ENCODE measurements at regions of chr22 and their contacts with region 1.

Region 1: GRCh38 chr22:45925811-45926351 is 51.1 kb downstream of the WNT7B start:
- DNase-seq: no peak
- ATAC-seq: peak; percentile 65
- H3K4me3 ChIP-seq: no peak overlapping the region
- H3K27ac ChIP-seq: peak overlapping the region; percentile 77
- H3K4me1 ChIP-seq: peaks cover 25% of the 10 kb centered on the region
- H3K27me3 ChIP-seq: no peaks in the 10 kb centered on the region
- CTCF ChIP-seq: no peak

Region 2: DNA sequence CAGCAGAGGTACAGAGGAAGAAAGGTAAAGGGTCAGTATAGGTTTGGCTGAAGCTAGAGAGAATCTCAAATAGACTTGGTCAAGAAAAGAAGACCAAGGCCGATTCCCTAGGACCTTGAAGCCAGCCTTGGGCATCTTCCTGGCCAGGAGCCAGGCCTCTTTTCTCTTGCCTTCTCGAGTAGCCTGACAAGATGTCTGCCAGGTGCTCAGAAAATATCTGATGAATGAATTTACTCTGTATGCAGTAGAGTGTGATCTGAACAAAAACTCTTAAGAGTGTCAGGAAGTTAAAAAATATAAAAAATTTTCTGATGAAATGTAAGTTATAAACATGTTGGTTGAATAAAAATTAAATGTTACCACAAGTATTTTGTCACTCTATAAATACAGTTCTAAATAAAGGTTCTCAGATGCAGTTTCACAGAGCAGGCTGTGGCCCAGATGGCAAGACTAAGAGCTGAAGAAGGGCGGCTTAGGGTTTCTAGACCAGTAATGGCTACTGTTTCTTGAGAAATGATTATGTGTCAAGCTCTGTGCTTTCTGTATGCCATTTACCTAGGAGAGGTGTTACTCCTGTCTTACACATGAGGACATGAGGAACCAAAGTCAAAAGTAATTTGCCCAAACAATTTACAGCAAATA is 156.2 kb before region 1 on chr22:
- CTCF ChIA-PET with region 1: no interaction called
- POLR2A ChIA-PET with region 1: no interaction called
- in situ Hi-C with region 1: no loop called
- intact Hi-C with region 1: no loop called
- DNase-seq: no peak
- ATAC-seq: no peak
- H3K4me3 ChIP-seq: no peak overlapping the region
- H3K27ac ChIP-seq: no peak overlapping the region
- H3K4me1 ChIP-seq: no peaks in the 10 kb centered on the region
- H3K27me3 ChIP-seq: no peaks in the 10 kb centered on the region
- CTCF ChIP-seq: no peak

Region 3: GRCh38 chr22:45863981-45864751 is 61.7 kb before region 1 on chr22:
- CTCF ChIA-PET with region 1: no interaction called
- POLR2A ChIA-PET with region 1: no interaction called
- in situ Hi-C with region 1: no loop called
- intact Hi-C with region 1: loop called (anchors 10 kb)
- DNase-seq: peak; percentile 43
- ATAC-seq: peak; percentile 77
- H3K4me3 ChIP-seq: no peak overlapping the region
- H3K27ac ChIP-seq: no peak overlapping the region
- H3K4me1 ChIP-seq: 0 out of 2 replicates have a peak, but pooled peaks cover 3% of the 10 kb centered on the region
- H3K27me3 ChIP-seq: no peaks in the 10 kb centered on the region
- CTCF ChIP-seq: peak; percentile 90

Region 4: DNA sequence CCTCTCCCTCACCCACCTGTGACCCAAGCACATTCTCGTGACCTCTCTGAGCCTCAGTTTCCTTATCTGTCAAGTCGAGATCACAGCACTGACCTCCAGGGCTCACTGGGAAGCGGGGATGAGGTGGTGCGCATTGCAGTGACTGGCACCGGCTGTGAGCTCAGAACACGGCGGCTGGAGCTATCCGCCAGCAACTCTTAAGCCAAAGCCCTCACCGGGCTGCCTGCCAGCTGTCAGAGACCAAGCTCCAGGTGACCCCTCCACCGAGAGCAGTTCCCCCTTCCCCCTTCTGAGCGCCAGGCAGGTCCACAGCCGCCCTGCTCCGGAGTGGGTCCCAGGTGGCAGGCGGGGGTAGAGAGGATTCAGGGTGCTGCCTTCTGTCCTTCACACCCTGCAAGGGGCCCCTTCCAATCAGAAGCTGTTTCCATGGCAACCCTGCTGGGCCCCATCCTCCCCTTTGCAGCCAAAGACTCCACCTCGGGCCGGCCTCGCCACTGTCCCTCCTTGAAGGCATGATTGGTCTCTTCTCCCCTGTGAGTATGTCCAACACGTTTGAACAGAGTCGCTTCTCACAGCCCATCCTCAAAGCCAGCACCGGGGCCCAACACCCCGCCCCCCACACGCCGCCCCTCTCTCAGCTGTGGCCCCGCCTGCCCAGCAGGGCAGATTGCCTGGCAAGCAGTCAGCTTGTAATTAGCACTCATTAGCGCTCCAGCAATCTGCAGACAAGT is 47.7 kb before region 1 on chr22:
- CTCF ChIA-PET with region 1: no interaction called
- POLR2A ChIA-PET with region 1: no interaction called
- in situ Hi-C with region 1: no loop called
- intact Hi-C with region 1: no loop called
- DNase-seq: no peak
- ATAC-seq: no peak
- H3K4me3 ChIP-seq: no peak overlapping the region
- H3K27ac ChIP-seq: no peak overlapping the region
- H3K4me1 ChIP-seq: no peaks in the 10 kb centered on the region
- H3K27me3 ChIP-seq: no peaks in the 10 kb centered on the region
- CTCF ChIP-seq: no peak